ENCODE measurements at regions of chr4 and their contacts with region 1.

Region 1: GRCh38 chr4:118034053-118034785 is at the start of gene NDST3:
- DNase-seq: peak; percentile 62
- H3K4me3 ChIP-seq: peak within 1 kb of the TSS; percentile 30 to 47 (median 37)
- H3K27ac ChIP-seq: no peak within 1 kb of the TSS
- H3K4me1 ChIP-seq: peaks cover 5% of the 10 kb centered on the region
- H3K27me3 ChIP-seq: peaks cover 10 to 27% of the 10 kb centered on the region in 2 experiments
- CTCF ChIP-seq: peak; percentile 40 to 46
- POLR2A ChIP-seq: no peak
- total RNA-seq, gene NDST3: not detected in 2 replicates

Region 2: DNA sequence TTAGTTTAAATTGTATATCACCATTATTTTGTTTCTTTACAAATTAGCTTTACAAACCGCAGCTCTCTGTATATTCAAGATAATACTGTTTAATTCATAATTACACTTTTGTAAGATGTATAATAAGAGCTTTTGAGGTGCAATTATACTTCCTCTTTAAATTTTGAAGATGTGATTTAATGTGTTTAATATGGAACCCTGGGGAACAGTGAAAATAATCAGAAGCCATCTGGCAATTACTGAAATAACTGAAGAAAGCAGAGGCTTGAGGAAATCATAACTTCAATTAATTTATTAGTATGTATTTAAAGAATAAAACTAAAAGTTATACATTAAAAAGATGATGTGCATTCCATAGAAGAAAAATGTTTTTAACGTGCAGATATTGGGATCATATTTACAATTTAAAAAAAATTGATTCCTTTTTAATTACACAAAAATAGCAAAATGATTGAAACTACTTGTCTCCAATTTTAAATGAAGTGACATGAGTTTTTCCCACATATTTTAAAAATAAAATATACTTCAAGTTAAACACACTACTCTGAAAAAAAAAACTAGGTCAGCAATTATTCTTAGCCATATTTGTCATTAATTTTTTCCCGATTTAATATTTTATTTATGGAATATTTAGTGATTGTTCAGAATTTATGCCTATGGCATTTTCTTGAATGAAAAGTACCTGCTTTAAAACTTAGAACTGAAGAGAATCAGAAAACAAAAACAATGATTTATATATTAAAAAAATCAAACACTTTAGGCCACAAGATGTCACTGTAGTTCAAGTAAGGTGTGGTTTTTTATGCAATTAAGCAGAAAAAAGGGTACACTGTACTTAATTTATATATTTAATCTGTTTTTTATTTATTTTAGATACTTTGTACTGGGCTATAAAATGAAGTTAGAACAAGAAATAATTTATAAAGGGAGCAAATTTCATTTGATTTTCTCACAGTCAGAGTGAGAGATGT is 1978.1 kb before region 1 on chr4:
- CTCF ChIA-PET with region 1: interaction called, 4 read pairs
- POLR2A ChIA-PET with region 1: no interaction called
- dilution Hi-C with region 1: no loop called
- intact Hi-C with region 1: loop called (anchors 1 kb)
- DNase-seq: peak; percentile 13
- H3K4me3 ChIP-seq: no peak overlapping the region
- H3K27ac ChIP-seq: no peak overlapping the region
- H3K4me1 ChIP-seq: no peaks in the 10 kb centered on the region
- H3K27me3 ChIP-seq: no peaks in the 10 kb centered on the region
- CTCF ChIP-seq: peak in 1 of 2 donors; percentile 4
- POLR2A ChIP-seq: no peak

Region 3: DNA sequence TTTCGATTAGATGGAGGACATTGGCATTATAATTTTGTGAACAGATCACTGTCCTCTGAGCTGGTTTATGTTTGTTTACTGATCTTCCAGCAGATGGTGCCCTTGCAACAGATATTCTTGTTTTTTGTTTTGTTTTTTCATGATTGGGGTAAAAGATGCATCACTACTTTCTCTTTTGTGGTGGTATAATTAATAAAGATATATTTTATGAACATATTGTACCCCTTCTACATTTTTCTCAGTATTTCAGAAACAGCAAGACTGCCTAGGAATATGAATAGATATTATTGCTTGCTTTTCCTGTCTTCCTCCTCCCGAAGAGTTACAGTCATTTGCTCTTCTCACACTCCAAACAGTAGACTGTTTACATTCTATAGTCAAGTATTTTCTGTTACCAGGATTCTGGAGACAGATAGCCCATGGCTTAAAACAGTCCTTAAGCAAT is 1854.0 kb before region 1 on chr4:
- CTCF ChIA-PET with region 1: interaction called, 32 read pairs
- POLR2A ChIA-PET with region 1: no interaction called
- dilution Hi-C with region 1: no loop called
- intact Hi-C with region 1: loop called (anchors 1 kb)
- DNase-seq: peak; percentile 14
- H3K4me3 ChIP-seq: peak overlapping the region in 2 of 3 experiments; percentile 14 to 40
- H3K27ac ChIP-seq: no peak overlapping the region
- H3K4me1 ChIP-seq: peaks cover 2% of the 10 kb centered on the region
- H3K27me3 ChIP-seq: no peaks in the 10 kb centered on the region
- CTCF ChIP-seq: peak; percentile 13 to 27
- POLR2A ChIP-seq: no peak

Region 4: DNA sequence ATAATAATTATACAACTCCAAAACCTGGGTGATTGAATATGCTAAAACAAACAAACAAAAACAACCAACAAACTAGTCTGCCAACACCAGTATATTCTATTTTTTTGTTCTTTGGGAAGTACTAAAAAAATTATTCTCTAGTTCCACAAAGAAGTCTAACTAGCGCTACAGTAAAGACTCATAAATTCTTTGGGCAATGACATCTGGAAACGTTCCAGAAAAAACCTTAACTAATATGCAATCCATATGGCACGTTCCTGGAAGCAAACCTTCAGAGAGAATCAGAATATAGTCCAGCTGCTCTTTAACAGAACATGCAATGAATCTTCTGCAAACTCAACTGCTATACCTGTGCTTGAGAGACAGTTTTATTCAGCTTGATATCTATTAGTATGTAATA is 1449.0 kb before region 1 on chr4:
- CTCF ChIA-PET with region 1: no interaction called
- POLR2A ChIA-PET with region 1: no interaction called
- dilution Hi-C with region 1: no loop called
- intact Hi-C with region 1: loop called (anchors 5 kb)
- DNase-seq: peak; percentile 5
- H3K4me3 ChIP-seq: no peak overlapping the region
- H3K27ac ChIP-seq: no peak overlapping the region
- H3K4me1 ChIP-seq: no peaks in the 10 kb centered on the region
- H3K27me3 ChIP-seq: no peaks in the 10 kb centered on the region
- CTCF ChIP-seq: no peak
- POLR2A ChIP-seq: no peak

Region 5: GRCh38 chr4:117134386-117134785 is 899.8 kb before region 1 on chr4:
- CTCF ChIA-PET with region 1: interaction called, 5 read pairs
- POLR2A ChIA-PET with region 1: no interaction called
- dilution Hi-C with region 1: no loop called
- intact Hi-C with region 1: loop called (anchors 1 kb)
- DNase-seq: peak; percentile 43
- H3K4me3 ChIP-seq: no peak overlapping the region
- H3K27ac ChIP-seq: no peak overlapping the region
- H3K4me1 ChIP-seq: no peaks in the 10 kb centered on the region
- H3K27me3 ChIP-seq: no peaks in the 10 kb centered on the region
- CTCF ChIP-seq: peak; percentile 15 to 24
- POLR2A ChIP-seq: no peak

Region 6: GRCh38 chr4:117965622-117966021 is 68.6 kb before region 1 on chr4:
- CTCF ChIA-PET with region 1: no interaction called
- POLR2A ChIA-PET with region 1: no interaction called
- dilution Hi-C with region 1: no loop called
- intact Hi-C with region 1: no loop called
- DNase-seq: no peak
- H3K4me3 ChIP-seq: no peak overlapping the region
- H3K27ac ChIP-seq: no peak overlapping the region
- H3K4me1 ChIP-seq: no peaks in the 10 kb centered on the region
- H3K27me3 ChIP-seq: no peaks in the 10 kb centered on the region
- CTCF ChIP-seq: no peak
- POLR2A ChIP-seq: no peak

Region 7: DNA sequence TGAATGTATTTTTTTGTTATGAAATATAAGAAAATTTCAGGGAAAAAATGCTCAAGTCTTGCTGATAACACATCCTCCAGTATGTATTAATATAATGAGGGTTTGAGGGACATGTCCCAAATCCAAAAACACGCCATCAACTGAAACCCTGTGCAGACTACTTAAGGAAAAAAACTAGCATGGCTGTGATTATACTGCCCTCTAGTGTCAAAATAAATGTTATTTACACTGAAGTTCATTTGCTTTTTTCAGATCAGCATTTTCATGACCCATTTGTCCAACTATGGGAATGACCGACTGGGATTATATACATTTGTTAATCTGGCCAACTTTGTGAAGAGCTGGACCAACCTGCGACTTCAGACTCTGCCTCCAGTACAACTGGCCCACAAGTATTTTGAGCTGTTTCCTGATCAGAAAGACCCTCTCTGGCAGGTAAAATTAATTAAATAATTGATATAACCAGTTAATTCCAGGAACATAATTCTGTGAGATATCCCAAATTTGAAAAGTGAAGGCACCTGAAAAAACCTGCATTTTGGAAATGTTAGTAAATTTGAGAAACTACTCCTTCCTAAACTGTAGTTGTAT is 190.1 kb after region 1 on chr4:
- CTCF ChIA-PET with region 1: interaction called, 30 read pairs
- POLR2A ChIA-PET with region 1: no interaction called
- dilution Hi-C with region 1: no loop called
- intact Hi-C with region 1: no loop called
- DNase-seq: peak; percentile 69
- H3K4me3 ChIP-seq: no peak overlapping the region
- H3K27ac ChIP-seq: no peak overlapping the region
- H3K4me1 ChIP-seq: no peaks in the 10 kb centered on the region
- H3K27me3 ChIP-seq: peaks cover 0 to 4% of the 10 kb centered on the region in 2 experiments
- CTCF ChIP-seq: peak; percentile 17 to 43
- POLR2A ChIP-seq: no peak